Activated naive CD4-positive, alpha-beta T cell treated with anti-CD3 and anti-CD28 coated beads, Interleukin-2, amount 10 ng/mL, durations not matched to agents 7 days and 5 days (primary cell): ENCODE measurements at regions of chr1 and their contacts with region 1.

Region 1: DNA sequence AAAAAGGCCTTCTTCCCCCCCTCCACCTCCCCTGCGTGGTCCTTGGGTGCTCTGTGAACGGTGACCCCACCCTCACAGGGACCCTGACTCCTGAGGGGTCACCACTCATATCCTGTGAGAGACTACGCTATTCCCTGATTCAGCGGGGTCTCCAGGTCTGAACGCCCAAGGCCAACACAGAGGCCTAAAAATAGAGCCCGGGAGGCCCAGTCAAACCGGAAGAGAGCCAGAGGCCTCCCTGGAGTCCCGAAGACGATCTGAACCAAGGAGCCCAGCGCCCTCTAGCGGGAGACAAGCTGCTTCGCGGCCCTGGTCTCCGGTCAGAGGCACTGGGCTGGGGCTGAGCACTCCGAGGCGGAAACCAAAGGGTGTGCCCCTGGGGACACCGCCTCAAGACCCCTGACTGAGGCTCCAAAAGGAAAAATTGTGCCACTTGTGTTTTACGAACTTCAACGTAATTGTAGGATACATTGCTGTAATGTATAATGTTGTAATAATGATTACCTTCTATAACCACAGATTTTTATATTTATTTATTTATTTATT is 42.4 kb upstream of the PSEN2 start:
- DNase-seq: peak; percentile 97
- H3K4me3 Mint-ChIP-seq: no peak overlapping the region
- H3K27ac Mint-ChIP-seq: peak overlapping the region; percentile 88
- H3K4me1 Mint-ChIP-seq: peaks cover 17% of the 10 kb centered on the region
- H3K27me3 Mint-ChIP-seq: peaks cover 16% of the 10 kb centered on the region

Region 2: GRCh38 chr1:226626577-226626956 is 201.5 kb before region 1 on chr1:
- CTCF ChIA-PET with region 1: interaction called, 75 read pairs
- DNase-seq: peak; percentile 83
- H3K4me3 Mint-ChIP-seq: no peak overlapping the region
- H3K27ac Mint-ChIP-seq: peak overlapping the region; percentile 39
- H3K4me1 Mint-ChIP-seq: peaks cover 21% of the 10 kb centered on the region
- H3K27me3 Mint-ChIP-seq: peaks cover 23% of the 10 kb centered on the region

Region 3: GRCh38 chr1:226664413-226665101 is 163.5 kb before region 1 on chr1:
- CTCF ChIA-PET with region 1: no interaction called
- DNase-seq: no peak
- H3K4me3 Mint-ChIP-seq: no peak overlapping the region
- H3K27ac Mint-ChIP-seq: peak overlapping the region; percentile 92
- H3K4me1 Mint-ChIP-seq: peaks cover 91% of the 10 kb centered on the region
- H3K27me3 Mint-ChIP-seq: no peaks in the 10 kb centered on the region

Region 4: GRCh38 chr1:226687426-226687825 is 140.6 kb before region 1 on chr1:
- CTCF ChIA-PET with region 1: interaction called, 10 read pairs
- DNase-seq: peak; percentile 47
- H3K4me3 Mint-ChIP-seq: no peak overlapping the region
- H3K27ac Mint-ChIP-seq: no peak overlapping the region
- H3K4me1 Mint-ChIP-seq: peaks cover 98% of the 10 kb centered on the region
- H3K27me3 Mint-ChIP-seq: no peaks in the 10 kb centered on the region

Region 5: DNA sequence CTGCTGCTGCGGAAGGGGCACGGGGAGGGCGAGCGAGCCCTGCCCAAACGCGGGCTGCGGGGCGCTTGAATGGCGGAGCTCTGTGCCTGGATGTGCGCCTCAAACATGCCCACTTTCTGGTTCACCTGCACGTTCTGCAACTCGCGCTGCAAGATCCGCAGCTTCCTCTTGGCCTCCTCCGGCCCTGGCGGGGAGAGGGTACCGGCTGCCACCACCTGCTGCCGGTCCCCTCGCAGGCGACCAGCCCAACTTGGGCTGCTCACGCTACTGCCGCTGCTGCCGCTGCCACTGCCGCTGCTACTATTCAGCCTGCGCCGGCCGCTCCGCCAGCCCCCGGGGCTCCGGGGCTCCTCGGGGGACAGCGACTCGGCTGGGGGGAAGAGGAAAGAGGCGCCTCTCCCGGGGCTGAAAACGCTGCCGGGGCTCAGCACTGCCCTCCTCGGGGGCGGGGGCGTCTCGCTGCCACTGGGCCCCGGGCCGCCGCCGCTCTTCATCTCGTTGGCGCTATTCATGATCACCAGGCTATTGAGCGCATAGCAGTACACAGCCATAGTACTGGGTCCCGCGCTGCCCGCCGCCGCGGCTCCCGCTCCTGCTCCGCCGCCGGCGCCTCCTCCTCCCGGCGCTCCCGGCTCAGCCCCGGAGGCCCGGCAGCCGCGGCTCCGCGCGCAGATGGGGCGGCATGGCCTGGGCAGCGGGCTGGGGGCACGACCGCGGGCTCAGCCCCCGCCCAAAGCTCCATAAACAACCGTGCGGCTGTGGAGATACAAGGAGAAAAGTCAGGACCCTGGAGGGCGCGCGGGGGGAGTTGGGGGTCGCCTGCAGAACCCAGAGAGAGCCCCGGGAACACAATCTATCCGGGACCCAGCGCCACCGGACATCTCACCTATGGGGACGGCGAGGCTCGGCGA is 90.9 kb before region 1 on chr1:
- CTCF ChIA-PET with region 1: interaction called, 19 read pairs
- DNase-seq: peak; percentile 69
- H3K4me3 Mint-ChIP-seq: peak overlapping the region; percentile 76
- H3K27ac Mint-ChIP-seq: peak overlapping the region; percentile 92
- H3K4me1 Mint-ChIP-seq: peaks cover 52% of the 10 kb centered on the region
- H3K27me3 Mint-ChIP-seq: no peaks in the 10 kb centered on the region

Region 6: DNA sequence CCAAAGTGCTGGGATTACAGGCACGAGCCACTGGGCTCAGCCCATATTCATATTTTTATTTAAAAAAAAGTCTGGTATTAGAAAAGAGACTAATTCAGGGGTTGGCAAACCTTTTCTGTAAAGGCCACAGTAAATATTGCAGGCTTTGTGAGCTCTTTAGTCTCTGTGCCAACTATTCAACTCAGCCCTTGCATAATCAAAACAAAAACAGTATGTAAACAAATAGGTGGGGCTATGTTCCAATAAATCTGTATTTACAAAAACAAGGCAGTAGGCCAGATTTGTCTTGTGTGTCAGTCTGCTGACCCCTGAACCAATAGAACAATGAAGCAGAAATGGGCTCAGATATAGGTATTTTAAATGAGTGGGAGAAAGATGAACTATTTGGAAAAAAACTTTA is 440.9 kb after region 1 on chr1:
- CTCF ChIA-PET with region 1: no interaction called
- DNase-seq: no peak
- H3K4me3 Mint-ChIP-seq: no peak overlapping the region
- H3K27ac Mint-ChIP-seq: no peak overlapping the region
- H3K4me1 Mint-ChIP-seq: no peaks in the 10 kb centered on the region
- H3K27me3 Mint-ChIP-seq: no peaks in the 10 kb centered on the region